HepG2 (cell line): ENCODE measurements at regions of chr16 and their contacts with region 1.

Region 1: DNA sequence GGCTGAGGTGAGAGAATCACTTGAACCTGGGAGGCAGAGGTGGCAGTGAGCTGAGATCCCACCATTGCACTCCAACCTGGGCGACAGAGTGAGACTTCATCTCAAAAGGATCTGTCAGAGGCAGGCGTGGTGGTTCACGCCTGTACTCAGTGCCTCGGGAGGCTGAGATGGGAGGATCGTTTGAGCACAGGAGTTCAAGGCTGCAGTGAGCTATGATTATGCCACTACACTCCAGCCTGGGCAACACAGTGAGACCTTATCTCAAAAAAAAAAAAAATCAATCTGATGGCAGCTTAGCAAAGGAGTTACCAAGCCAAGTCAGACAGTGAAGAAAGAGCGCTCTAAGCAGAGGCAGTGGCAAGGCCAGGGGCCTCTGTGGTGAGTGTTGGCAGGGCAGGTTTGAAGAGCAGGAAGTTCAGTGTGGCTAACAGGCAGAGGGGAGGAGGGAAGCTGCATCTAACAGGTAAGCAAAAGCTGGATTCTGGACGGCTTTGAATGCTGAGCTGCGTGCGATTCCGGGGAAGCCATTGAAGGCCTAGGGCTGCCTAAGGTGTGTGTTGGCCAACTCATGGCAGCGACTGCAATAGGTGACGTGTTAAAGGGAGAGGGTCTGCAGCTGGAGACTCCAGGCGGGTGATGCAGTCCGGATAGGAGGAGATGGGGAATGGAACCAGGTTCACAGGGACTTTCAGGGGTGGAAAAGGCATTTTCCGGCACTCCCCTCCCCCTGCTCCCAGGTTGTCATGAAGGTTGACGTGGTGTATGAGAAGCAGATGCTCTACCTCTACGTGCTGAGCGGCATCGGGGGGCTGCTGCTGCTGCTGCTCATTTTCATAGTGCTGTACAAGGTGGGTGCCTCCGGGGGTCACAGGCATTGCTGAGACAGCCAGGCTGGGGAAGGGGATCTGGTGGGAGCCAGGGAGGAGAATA is 7.0 kb downstream of the ZNF768 start:
- DNase-seq: no peak
- ATAC-seq: peak; percentile 13
- H3K4me3 ChIP-seq: no peak overlapping the region
- H3K27ac ChIP-seq: no peak overlapping the region
- H3K4me1 ChIP-seq: peaks cover 54% of the 10 kb centered on the region
- H3K27me3 ChIP-seq: no peaks in the 10 kb centered on the region
- CTCF ChIP-seq: no peak
- EP300 ChIP-seq: no peak
- POLR2A ChIP-seq: no peak
- RAD21 ChIP-seq: no peak

Region 2: DNA sequence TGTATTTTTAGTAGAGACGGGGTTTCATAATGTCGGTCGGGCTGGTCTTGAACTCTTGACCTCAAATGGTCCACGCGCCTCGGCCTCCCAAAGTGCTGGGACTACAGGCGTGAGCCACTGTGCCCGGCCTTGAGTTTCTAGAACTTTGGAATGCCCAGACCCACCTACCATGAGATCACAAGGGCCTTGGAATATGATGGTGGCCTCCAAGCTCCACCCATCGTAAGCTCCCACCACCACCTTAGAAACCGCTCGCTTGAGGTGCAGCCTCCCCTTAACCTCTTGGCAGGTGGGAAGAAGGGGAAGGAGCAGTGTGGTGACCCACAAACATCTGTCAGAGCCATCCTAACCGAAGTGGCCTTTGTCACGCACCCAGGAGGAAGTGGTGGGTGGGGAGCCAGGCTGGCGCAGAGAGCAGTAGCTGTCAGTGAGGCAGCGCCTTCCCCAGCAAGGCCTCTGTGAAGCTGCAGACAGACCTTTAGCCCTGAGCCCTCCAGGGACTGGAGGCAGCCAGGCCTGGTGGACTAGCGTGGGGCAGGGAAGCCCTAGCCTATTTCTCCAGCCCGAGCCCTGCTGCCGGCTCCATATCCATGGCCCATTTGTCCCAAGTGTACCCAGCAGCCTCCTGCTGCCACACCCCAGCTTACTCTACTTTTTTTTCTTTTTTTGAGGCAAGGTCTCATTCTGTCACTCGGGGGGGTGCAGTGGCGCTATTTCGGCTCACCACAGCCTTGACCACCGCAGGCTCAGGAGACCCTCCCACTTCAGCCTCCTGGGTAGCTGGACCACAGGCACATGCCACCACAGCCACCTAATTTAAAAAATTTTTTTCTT is 60.6 kb before region 1 on chr16:
- CTCF ChIA-PET with region 1: no interaction called
- POLR2A ChIA-PET with region 1: no interaction called
- in situ Hi-C with region 1: loop called (anchors 5 kb)
- intact Hi-C with region 1: no loop called
- DNase-seq: peak; percentile 63
- ATAC-seq: peak; percentile 98
- H3K4me3 ChIP-seq: peak overlapping the region; percentile 41 to 68 (median 54)
- H3K27ac ChIP-seq: peak overlapping the region; percentile 67
- H3K4me1 ChIP-seq: peaks cover 63% of the 10 kb centered on the region
- H3K27me3 ChIP-seq: no peaks in the 10 kb centered on the region
- CTCF ChIP-seq: peak; percentile 37
- EP300 ChIP-seq: no peak
- POLR2A ChIP-seq: peak; percentile 55 to 66; a peak in 3 of 4 replicates
- RAD21 ChIP-seq: no peak

Region 3: DNA sequence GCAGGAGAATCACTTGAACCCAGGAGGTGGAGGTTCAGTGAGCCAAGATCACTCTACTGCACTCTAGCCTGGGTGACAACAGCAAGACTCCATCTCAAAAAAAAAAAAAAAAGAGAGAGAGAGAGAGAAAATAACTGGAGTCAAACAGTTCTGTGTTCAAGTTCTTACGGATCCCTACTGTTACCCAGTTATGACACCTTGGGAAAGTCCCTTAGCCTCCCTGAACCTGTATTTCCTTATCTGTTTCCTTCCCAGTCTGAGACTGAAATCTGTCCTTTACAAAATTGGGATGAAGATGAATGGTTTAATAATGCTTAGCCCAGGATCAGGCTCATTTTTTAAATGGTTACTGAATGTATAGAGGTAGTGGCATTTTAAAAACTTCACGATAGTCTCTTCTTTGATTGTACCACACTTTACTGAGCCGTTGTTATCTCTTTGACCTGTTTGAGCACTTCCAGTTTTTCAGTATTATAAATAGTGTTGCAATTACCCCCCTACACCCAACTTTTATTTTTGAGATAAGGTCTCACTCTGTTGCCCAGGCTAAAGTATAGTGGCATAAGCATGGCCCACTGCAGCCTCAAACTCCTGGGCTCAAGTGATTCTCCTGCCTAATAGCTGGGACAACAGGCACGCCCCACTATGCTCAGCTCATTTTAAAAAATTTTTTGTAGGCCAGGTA is 10.2 kb before region 1 on chr16:
- CTCF ChIA-PET with region 1: no interaction called
- POLR2A ChIA-PET with region 1: no interaction called
- in situ Hi-C with region 1: no loop called
- intact Hi-C with region 1: no loop called
- DNase-seq: no peak
- ATAC-seq: no peak
- H3K4me3 ChIP-seq: no peak overlapping the region
- H3K27ac ChIP-seq: no peak overlapping the region
- H3K4me1 ChIP-seq: peaks cover 7% of the 10 kb centered on the region
- H3K27me3 ChIP-seq: no peaks in the 10 kb centered on the region
- CTCF ChIP-seq: no peak
- EP300 ChIP-seq: no peak
- POLR2A ChIP-seq: no peak
- RAD21 ChIP-seq: no peak